ENCODE measurements at regions of chr4 and their contacts with region 1.

Region 1: GRCh38 chr4:1471443-1472147 is 65.4 kb upstream of the NKX1-1 start:
- DNase-seq: peak; percentile 16
- H3K4me3 ChIP-seq: no peak overlapping the region
- H3K27ac ChIP-seq: no peak overlapping the region
- H3K4me1 ChIP-seq: no peaks in the 10 kb centered on the region
- H3K27me3 ChIP-seq: peaks cover 34% of the 10 kb centered on the region
- CTCF ChIP-seq: no peak

Region 2: DNA sequence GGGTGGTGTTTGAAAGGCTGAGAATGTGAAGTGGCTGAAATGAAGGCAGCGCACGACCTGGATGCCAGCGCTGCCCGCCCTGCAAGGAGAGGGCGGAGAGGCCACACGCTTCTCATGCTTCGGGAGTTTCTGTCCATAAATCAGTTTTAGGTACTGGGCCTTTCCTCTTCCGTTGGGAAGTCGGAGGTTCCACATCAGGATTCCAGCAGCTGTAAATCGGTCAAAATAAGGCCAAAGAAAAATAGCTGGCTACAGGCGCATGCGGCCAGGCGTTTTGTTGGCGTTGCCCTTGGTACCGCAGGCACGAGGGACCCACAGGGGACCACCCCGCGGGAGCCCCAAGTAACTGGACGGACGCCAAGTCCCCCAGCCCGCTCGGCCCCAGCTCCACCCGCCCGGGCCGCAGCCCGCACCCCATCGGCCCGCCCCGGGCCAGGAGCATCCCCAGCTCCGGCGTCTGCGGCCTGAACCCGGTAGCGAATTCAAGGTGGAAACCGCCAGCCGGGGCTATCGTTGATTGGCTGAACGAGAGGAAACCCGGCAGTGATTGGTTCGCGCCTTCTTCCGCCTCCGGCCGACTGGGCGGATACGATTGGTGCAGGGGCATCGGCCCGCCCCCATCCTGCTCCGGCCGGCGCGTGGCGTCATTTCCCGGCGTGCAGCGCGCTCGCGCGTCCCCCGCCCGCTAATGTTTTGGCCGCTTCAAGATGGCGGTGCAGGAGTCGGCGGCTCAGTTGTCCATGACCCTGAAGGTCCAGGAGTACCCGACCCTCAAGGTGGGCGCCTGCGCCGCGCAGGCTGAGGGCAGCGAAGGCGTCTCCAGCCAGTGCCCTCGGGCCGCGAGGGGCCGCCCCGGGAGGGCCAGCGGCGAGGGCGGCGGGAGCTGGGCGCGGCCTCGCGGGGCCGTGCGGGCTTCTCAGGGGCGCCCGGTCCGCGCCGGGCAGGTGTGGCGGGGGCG is 182.1 kb before region 1 on chr4 and contains the start of gene MAEA:
- CTCF ChIA-PET with region 1: no interaction called
- POLR2A ChIA-PET with region 1: no interaction called
- intact Hi-C with region 1: no loop called
- DNase-seq: peak; percentile 98
- H3K4me3 ChIP-seq: peak within 1 kb of the TSS; percentile 97
- H3K27ac ChIP-seq: peak within 1 kb of the TSS; percentile 81
- H3K4me1 ChIP-seq: peaks cover 9% of the 10 kb centered on the region
- H3K27me3 ChIP-seq: no peaks in the 10 kb centered on the region
- CTCF ChIP-seq: no peak
- total RNA-seq, gene MAEA: 85.9 and 87.0 TPM in 2 replicates

Region 3: GRCh38 chr4:1446508-1447386 is 24.8 kb before region 1 on chr4:
- CTCF ChIA-PET with region 1: interaction called, 11 read pairs
- POLR2A ChIA-PET with region 1: no interaction called
- intact Hi-C with region 1: no loop called
- DNase-seq: no peak
- H3K4me3 ChIP-seq: no peak overlapping the region
- H3K27ac ChIP-seq: no peak overlapping the region
- H3K4me1 ChIP-seq: no peaks in the 10 kb centered on the region
- H3K27me3 ChIP-seq: peaks cover 16% of the 10 kb centered on the region
- CTCF ChIP-seq: no peak

Region 4: GRCh38 chr4:1459722-1460511 is 11.7 kb before region 1 on chr4:
- CTCF ChIA-PET with region 1: no interaction called
- POLR2A ChIA-PET with region 1: no interaction called
- intact Hi-C with region 1: no loop called
- DNase-seq: no peak
- H3K4me3 ChIP-seq: no peak overlapping the region
- H3K27ac ChIP-seq: no peak overlapping the region
- H3K4me1 ChIP-seq: no peaks in the 10 kb centered on the region
- H3K27me3 ChIP-seq: peaks cover 86% of the 10 kb centered on the region
- CTCF ChIP-seq: no peak